Activated naive CD4-positive, alpha-beta T cell treated with anti-CD3 and anti-CD28 coated beads for 36 hours (primary cell): ENCODE measurements at regions of chr3 and their contacts with region 1.

Region 1: GRCh38 chr3:113745273-113746068 is 578 bp downstream of the NAA50 start:
- DNase-seq: peak; percentile 92
- H3K4me3 Mint-ChIP-seq: peak overlapping the region; percentile 98
- H3K27ac Mint-ChIP-seq: peak overlapping the region; percentile 100
- H3K4me1 Mint-ChIP-seq: peaks cover 63% of the 10 kb centered on the region
- H3K27me3 Mint-ChIP-seq: no peaks in the 10 kb centered on the region

Region 2: GRCh38 chr3:112498914-112499711 is 1246.4 kb before region 1 on chr3 and contains the start of gene BTLA:
- CTCF ChIA-PET with region 1: no interaction called
- intact Hi-C with region 1: loop called (anchors 5 kb)
- DNase-seq: peak; percentile 71
- H3K4me3 Mint-ChIP-seq: peak within 1 kb of the TSS; percentile 100
- H3K27ac Mint-ChIP-seq: peak within 1 kb of the TSS; percentile 100
- H3K4me1 Mint-ChIP-seq: peaks cover 51% of the 10 kb centered on the region
- H3K27me3 Mint-ChIP-seq: no peaks in the 10 kb centered on the region
- total RNA-seq, gene BTLA: 70.6 to 73.4 TPM

Region 3: GRCh38 chr3:113051302-113051711 is 694.2 kb before region 1 on chr3:
- CTCF ChIA-PET with region 1: no interaction called
- intact Hi-C with region 1: loop called (anchors 1 kb)
- DNase-seq: peak; percentile 96
- H3K4me3 Mint-ChIP-seq: no peak overlapping the region
- H3K27ac Mint-ChIP-seq: no peak overlapping the region
- H3K4me1 Mint-ChIP-seq: peaks cover 12% of the 10 kb centered on the region
- H3K27me3 Mint-ChIP-seq: no peaks in the 10 kb centered on the region

Region 4: GRCh38 chr3:113304856-113305540 is 440.5 kb before region 1 on chr3:
- CTCF ChIA-PET with region 1: no interaction called
- intact Hi-C with region 1: no loop called
- DNase-seq: no peak
- H3K4me3 Mint-ChIP-seq: no peak overlapping the region
- H3K27ac Mint-ChIP-seq: no peak overlapping the region
- H3K4me1 Mint-ChIP-seq: no peaks in the 10 kb centered on the region
- H3K27me3 Mint-ChIP-seq: no peaks in the 10 kb centered on the region

Region 5: DNA sequence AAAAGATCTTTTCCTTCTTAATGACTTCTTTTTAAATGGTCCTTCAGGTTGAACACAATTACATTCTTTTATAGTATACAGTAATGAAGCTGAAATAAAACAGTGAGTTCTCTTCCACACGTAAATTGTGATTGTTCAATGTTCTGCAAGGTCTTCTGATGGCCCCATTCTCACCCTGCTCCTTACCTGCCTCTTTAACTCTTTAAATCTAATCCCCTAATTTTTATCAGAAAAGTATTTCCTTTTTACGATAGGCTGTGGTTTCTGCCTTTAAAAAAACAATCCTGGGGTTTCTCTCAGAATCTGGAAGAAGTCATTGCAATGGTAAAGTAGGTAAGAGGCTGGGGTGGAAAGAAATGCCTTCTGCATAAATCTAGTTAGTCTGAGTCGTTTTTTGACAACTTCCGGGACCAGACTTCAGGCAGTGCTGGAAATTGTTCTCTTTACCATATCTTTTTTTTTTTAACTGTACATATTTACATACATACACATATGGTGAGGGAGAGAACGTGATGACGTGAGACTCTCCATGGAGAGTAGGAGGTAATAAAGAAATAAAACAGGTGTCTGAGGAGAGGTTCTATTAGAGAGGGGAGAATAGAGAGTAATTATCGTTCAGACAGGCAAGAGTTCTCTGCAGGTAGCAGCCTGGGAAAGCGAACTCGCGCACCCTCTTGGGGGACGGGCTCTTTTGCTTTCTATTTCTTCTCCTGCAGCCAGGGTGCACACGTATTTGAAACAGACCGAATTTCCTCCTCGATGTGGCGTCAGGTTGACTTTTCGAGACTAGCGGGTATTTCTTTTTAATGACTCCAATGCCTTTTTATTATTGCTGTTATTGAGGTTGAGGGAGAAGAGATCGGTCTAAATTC is 213.4 kb before region 1 on chr3 and contains the start of gene SIDT1:
- CTCF ChIA-PET with region 1: interaction called, 3 read pairs
- intact Hi-C with region 1: loop called (anchors 1 kb)
- DNase-seq: peak; percentile 82
- H3K4me3 Mint-ChIP-seq: peak within 1 kb of the TSS; percentile 97
- H3K27ac Mint-ChIP-seq: peak within 1 kb of the TSS; percentile 96
- H3K4me1 Mint-ChIP-seq: peaks cover 46% of the 10 kb centered on the region
- H3K27me3 Mint-ChIP-seq: no peaks in the 10 kb centered on the region
- total RNA-seq, gene SIDT1: 14.6 to 14.9 TPM

Region 6: DNA sequence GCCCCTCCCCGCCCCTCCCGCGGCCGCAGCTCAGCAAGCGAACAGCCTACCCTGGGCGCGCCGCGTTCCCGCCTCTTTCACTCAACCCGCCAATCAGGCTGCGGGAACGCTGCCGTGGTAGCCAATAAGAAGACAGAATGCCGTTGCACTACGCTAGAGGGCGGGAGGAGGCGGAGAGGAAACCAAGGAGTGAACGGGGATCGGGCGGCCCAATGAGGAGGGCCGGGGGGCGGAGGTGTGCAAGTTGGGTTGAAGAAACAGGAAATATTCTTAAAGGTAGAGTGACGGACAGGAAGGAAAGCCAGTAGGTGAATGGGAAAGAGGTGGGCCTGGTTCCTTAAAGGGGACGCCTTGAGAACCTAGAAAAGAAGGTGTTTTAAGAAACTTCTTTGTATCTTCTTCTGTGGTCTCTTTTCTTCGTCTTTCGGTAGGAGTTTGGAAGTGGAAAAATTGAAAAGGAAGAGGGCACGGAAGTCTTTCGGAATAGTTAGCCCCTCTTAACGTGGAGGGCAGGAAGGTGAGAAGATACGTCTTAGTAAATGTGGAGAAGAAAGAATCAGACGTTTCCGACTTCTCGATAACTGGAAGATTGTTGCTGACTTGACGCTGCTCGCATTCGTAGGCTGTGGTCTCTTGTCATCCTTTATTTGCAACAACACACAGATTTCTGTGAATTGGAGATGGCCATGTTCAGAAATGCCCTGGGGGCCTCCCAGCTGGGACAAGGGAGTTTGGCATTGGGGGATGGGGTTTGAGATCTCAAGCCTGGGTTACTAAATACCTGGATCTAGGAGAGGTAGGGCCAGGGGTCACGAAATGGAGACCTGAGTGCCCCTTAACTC is 48.6 kb before region 1 on chr3:
- CTCF ChIA-PET with region 1: interaction called, 16 read pairs
- intact Hi-C with region 1: loop called (anchors 1 kb)
- DNase-seq: peak; percentile 99
- H3K4me3 Mint-ChIP-seq: no peak overlapping the region
- H3K27ac Mint-ChIP-seq: no peak overlapping the region
- H3K4me1 Mint-ChIP-seq: peaks cover 25% of the 10 kb centered on the region
- H3K27me3 Mint-ChIP-seq: no peaks in the 10 kb centered on the region

Region 7: GRCh38 chr3:114056130-114057010 is 310.9 kb after region 1 on chr3 and contains the starts of genes CCDC191 and QTRT2:
- CTCF ChIA-PET with region 1: interaction called, 3 read pairs
- intact Hi-C with region 1: loop called (anchors 1 kb)
- DNase-seq: peak; percentile 100
- H3K4me3 Mint-ChIP-seq: peak within 1 kb of the TSS; percentile 97
- H3K27ac Mint-ChIP-seq: peak within 1 kb of the TSS; percentile 95
- H3K4me1 Mint-ChIP-seq: peaks cover 36% of the 10 kb centered on the region
- H3K27me3 Mint-ChIP-seq: no peaks in the 10 kb centered on the region
- total RNA-seq, gene CCDC191: 1.8 to 2.0 TPM
- total RNA-seq, gene QTRT2: 23.0 to 27.8 TPM

Region 8: GRCh38 chr3:115658337-115659181 is 1913.1 kb after region 1 on chr3:
- CTCF ChIA-PET with region 1: no interaction called
- intact Hi-C with region 1: loop called (anchors 5 kb)
- DNase-seq: peak; percentile 84
- H3K4me3 Mint-ChIP-seq: peak overlapping the region; percentile 90
- H3K27ac Mint-ChIP-seq: peak overlapping the region; percentile 96
- H3K4me1 Mint-ChIP-seq: peaks cover 45% of the 10 kb centered on the region
- H3K27me3 Mint-ChIP-seq: peaks cover 3% of the 10 kb centered on the region